ENCODE measurements at regions of chr3 and their contacts with region 1.

Region 1: GRCh38 chr3:5304789-5305683 is 117.5 kb downstream of the EDEM1 start:
- DNase-seq: peak; percentile 34
- ATAC-seq: peak; percentile 91
- H3K4me3 ChIP-seq: no peak overlapping the region
- H3K27ac ChIP-seq: no peak overlapping the region
- H3K4me1 ChIP-seq: 0 out of 2 replicates have a peak, but pooled peaks cover 7% of the 10 kb centered on the region
- H3K27me3 ChIP-seq: 0 out of 5 replicates have a peak, but pooled peaks cover 0 to 3% of the 10 kb centered on the region in 2 experiments
- CTCF ChIP-seq: peak; percentile 84
- EP300 ChIP-seq: no peak
- POLR2A ChIP-seq: no peak
- RAD21 ChIP-seq: peak; percentile 74

Region 2: DNA sequence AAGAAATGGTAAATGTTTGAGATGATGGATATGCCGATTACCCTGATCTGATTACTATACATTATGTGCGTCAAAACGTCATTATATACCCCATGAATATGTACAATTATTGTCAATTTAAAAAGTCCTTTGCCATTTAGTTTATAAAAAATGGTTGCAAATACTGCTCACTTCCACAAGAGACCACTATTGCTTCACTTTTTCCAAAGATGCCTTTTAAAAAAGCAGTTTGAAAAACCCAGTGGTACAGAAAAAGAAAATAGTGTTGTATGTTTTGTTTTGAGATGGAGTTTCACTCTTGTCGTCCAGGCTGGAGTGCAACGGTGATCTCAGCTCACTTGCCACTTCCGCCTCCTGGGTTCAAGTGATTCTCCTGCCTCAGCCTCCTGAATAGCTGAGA is 78.3 kb before region 1 on chr3:
- CTCF ChIA-PET with region 1: no interaction called
- POLR2A ChIA-PET with region 1: no interaction called
- in situ Hi-C with region 1: no loop called
- intact Hi-C with region 1: loop called (anchors 1 kb)
- DNase-seq: peak; percentile 5
- ATAC-seq: 0 out of 3 replicates have a peak, but pooled peaks have one; percentile 22
- H3K4me3 ChIP-seq: no peak overlapping the region
- H3K27ac ChIP-seq: no peak overlapping the region
- H3K4me1 ChIP-seq: no peaks in the 10 kb centered on the region
- H3K27me3 ChIP-seq: peaks cover 1 to 24% of the 10 kb centered on the region in 2 experiments; a peak in 2 of 5 replicates
- CTCF ChIP-seq: peak; percentile 53
- EP300 ChIP-seq: no peak
- POLR2A ChIP-seq: no peak
- RAD21 ChIP-seq: no peak; the same call in 1 of the 2 replicates

Region 3: DNA sequence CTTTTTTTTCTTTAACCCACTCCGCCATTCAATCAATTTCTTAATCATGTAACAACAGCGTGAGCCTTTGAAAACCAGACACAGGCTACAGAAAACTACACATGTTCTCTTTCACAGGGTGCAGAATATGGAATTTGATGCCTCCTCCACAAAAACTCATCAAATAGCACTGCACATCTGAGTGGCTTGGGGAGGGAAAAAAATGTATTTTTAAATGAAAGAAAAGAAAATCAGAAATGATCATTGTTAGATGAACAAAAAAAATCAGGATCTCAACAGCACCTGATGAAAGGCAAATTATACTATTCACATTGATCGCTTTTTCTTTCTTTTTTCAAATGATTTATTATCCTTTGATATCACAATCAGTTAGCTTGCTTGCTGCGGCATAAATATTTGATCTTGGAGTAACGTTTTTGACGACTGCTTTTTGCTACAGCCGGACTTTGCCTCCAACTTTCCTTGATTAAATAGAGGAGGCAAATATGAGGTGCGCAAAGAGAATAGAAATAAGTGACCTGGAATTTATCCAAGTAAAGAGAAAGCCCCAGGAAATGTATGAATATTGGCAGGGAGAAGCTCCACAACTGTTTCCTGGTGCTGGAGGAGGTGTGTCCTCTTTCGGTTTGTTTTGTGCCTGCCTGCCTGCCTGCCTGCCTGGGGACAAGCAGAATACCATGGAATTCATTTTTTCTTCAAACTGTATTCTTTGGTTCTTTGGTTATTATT is 54.4 kb before region 1 on chr3:
- CTCF ChIA-PET with region 1: no interaction called
- POLR2A ChIA-PET with region 1: no interaction called
- in situ Hi-C with region 1: no loop called
- intact Hi-C with region 1: no loop called
- DNase-seq: peak; percentile 62
- ATAC-seq: peak; percentile 86
- H3K4me3 ChIP-seq: peak overlapping the region; percentile 32 to 45 (median 42); a peak in 5 of 6 replicates
- H3K27ac ChIP-seq: no peak overlapping the region
- H3K4me1 ChIP-seq: peaks cover 21% of the 10 kb centered on the region
- H3K27me3 ChIP-seq: peaks cover 0 to 15% of the 10 kb centered on the region in 2 experiments; a peak in 1 of 5 replicates
- CTCF ChIP-seq: no peak
- EP300 ChIP-seq: no peak
- POLR2A ChIP-seq: no peak
- RAD21 ChIP-seq: no peak

Region 4: DNA sequence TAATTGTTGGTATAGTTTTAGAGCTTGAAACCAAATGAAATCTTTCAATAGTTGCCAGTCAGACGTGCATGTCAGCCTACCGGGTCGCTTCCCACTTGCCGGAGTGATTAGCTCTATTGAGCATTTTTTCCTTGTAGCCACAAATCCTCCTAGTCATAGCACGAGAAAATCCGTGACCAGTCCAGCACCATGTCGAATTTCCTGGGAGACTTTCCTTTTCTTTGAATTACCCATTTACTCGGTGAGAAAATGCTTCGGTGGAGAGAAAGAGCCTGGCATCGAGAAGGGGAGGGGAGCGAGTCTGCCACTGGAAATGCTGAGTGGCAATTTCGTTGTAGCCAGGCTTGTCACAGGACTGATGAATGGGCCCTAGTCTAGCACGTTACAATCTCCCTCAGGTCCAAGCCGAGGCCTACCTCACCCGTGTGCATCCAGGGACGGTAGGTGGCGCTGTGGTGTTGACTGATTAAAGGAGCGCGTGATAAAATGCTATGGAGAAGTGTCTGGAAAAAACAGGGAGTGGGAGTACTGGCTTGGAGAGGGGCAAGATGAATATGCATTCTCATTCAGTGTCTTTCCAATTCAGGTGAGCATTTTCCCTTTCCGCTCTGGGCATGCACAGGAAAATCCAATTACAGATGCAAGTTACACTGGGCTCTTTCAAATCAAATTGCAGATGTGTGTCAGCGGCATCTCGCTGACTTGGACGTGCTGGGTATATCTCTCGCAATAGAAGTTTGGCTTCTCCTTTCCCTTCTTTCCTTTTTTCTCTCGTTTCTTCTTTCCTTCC is 121.3 kb after region 1 on chr3:
- CTCF ChIA-PET with region 1: no interaction called
- POLR2A ChIA-PET with region 1: no interaction called
- in situ Hi-C with region 1: no loop called
- intact Hi-C with region 1: loop called (anchors 1 kb)
- DNase-seq: peak; percentile 57
- ATAC-seq: peak; percentile 100
- H3K4me3 ChIP-seq: no peak overlapping the region
- H3K27ac ChIP-seq: no peak overlapping the region
- H3K4me1 ChIP-seq: no peaks in the 10 kb centered on the region
- H3K27me3 ChIP-seq: no peaks in the 10 kb centered on the region
- CTCF ChIP-seq: peak; percentile 92
- EP300 ChIP-seq: no peak
- POLR2A ChIP-seq: no peak
- RAD21 ChIP-seq: peak; percentile 59

Region 5: GRCh38 chr3:5568458-5568857 is 263.4 kb after region 1 on chr3:
- CTCF ChIA-PET with region 1: no interaction called
- POLR2A ChIA-PET with region 1: no interaction called
- in situ Hi-C with region 1: no loop called
- intact Hi-C with region 1: loop called (anchors 1 kb)
- DNase-seq: peak; percentile 2
- ATAC-seq: 0 out of 3 replicates have a peak, but pooled peaks have one; percentile 31
- H3K4me3 ChIP-seq: no peak overlapping the region
- H3K27ac ChIP-seq: no peak overlapping the region
- H3K4me1 ChIP-seq: no peaks in the 10 kb centered on the region
- H3K27me3 ChIP-seq: no peaks in the 10 kb centered on the region
- CTCF ChIP-seq: peak; percentile 48
- EP300 ChIP-seq: no peak
- POLR2A ChIP-seq: no peak
- RAD21 ChIP-seq: no peak

Region 6: GRCh38 chr3:5731094-5731493 is 426.1 kb after region 1 on chr3:
- CTCF ChIA-PET with region 1: no interaction called
- POLR2A ChIA-PET with region 1: no interaction called
- in situ Hi-C with region 1: no loop called
- intact Hi-C with region 1: loop called (anchors 10 kb)
- DNase-seq: no peak
- ATAC-seq: no peak
- H3K4me3 ChIP-seq: no peak overlapping the region
- H3K27ac ChIP-seq: no peak overlapping the region
- H3K4me1 ChIP-seq: no peaks in the 10 kb centered on the region
- H3K27me3 ChIP-seq: no peaks in the 10 kb centered on the region; a peak in 1 of 5 replicates
- CTCF ChIP-seq: no peak; the same call in 1 of the 2 replicates
- EP300 ChIP-seq: no peak
- POLR2A ChIP-seq: no peak
- RAD21 ChIP-seq: no peak

Region 7: GRCh38 chr3:6799264-6799915 is 1494.4 kb after region 1 on chr3:
- CTCF ChIA-PET with region 1: interaction called, 5 read pairs
- POLR2A ChIA-PET with region 1: no interaction called
- in situ Hi-C with region 1: loop called (anchors 5 kb)
- intact Hi-C with region 1: loop called (anchors 1 kb)
- DNase-seq: peak; percentile 23
- ATAC-seq: peak; percentile 84
- H3K4me3 ChIP-seq: no peak overlapping the region
- H3K27ac ChIP-seq: no peak overlapping the region
- H3K4me1 ChIP-seq: no peaks in the 10 kb centered on the region
- H3K27me3 ChIP-seq: no peaks in the 10 kb centered on the region
- CTCF ChIP-seq: peak; percentile 70
- EP300 ChIP-seq: no peak
- POLR2A ChIP-seq: no peak
- RAD21 ChIP-seq: no peak